Astrocyte of the cerebellum (primary cell): ENCODE measurements at regions of chr2 and their contacts with region 1.

Region 1: DNA sequence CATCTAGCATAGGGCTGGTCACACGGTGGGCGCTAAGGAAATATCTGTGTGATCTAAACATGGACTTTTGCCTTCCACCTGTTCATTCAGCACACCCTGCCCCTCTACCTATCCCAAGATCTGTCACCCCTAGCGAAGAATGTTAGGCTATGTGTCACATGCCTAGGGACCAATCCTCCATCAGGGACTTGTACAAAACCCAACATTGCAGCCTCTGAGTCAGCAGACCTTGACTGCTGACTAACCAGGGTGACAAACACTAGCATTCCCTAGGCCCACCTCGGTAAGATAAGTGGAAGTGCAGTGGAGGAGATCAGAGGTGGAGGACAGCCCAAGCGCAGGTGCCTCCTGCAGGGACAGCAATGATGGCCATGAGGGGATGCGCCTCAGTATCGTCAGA is 99.2 kb downstream of the SOX11 start:
- DNase-seq: no peak
- H3K4me3 ChIP-seq: no peak overlapping the region
- CTCF ChIP-seq: no peak

Region 2: DNA sequence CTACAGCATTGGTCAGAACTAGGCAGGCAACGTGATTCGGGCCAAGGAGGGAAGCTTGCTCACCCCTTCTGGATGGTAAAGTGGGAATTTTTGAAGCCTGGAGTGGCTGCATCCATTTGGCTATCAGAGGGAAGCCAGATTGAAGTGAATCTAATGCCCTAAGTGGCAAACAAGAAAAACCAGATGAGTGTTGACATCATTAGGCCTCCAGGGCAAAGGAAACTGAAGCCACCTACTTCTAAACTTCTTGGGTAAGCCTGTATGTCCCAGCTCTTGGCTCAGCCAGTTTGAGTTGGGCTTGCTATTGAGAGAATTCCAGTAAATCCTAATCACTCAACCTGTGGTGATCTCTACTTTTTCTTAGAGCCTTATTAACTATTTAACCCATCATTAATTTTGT is 78.3 kb before region 1 on chr2:
- in situ Hi-C with region 1: no loop called
- DNase-seq: no peak
- H3K4me3 ChIP-seq: no peak overlapping the region
- CTCF ChIP-seq: no peak

Region 3: GRCh38 chr2:5756272-5756671 is 35.1 kb before region 1 on chr2:
- in situ Hi-C with region 1: loop called (anchors 5 kb)
- DNase-seq: no peak
- H3K4me3 ChIP-seq: no peak overlapping the region
- CTCF ChIP-seq: no peak

Region 4: DNA sequence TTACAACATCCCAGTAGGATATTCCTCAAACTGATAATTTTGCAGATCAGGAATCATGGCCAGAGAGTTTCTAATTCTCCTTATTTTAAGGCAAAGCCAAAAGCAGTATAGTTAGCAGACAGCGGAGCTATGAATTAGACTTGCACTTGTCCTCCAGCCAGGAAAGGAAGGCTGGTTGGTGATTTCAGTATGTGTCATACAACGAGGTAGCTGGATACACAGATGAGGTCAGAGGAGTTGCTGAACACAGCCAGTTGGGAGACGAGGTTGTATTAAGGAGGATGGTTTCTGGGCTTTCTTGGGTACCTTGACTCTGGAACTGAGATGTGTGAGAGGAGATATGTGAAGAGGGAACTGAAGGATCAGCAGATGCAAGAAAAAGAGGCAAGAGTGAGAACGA is 86.0 kb after region 1 on chr2:
- in situ Hi-C with region 1: no loop called
- DNase-seq: peak; percentile 40
- H3K4me3 ChIP-seq: no peak overlapping the region
- CTCF ChIP-seq: no peak